ENCODE measurements at regions of chr15 and their contacts with region 1.

Region 1: DNA sequence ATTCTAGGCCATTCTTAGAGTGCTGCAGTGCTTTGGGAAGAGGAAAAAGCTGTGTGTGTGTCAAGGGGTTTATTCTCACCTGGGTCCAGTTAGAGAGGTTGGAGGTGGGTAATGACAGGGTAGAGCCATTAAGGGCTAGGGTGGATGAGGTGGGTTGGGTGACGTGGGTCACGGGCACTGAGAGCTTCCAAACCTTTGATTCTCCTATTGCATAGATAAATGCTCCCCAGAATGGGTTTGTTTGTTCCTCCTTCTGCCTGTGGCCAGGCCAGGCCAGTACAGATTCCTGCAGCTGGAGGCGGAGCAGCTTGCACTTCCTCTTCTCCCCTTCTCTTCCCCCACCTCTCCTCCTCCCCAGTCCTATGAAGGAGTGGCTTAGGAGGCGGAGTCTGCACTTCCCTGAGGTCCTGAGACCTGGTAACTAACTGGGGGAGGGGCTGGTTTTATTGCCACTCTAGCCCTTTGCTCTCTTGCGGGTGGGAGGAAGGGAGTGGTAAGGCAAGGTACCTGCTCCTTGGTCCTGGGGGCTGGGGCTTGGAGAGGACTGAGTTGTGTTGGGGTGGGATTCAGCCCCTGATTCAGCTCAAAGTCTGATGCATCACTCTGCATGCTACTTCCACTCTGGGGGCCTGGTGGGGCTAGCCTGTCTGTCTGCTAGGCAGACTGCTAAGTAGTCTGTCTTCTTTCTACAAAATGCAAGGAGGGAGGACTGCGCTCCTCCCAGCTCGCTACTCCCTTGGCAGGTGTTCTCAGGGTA is 3.5 kb downstream of the SPINT1 start:
- DNase-seq: peak; percentile 83

Region 2: DNA sequence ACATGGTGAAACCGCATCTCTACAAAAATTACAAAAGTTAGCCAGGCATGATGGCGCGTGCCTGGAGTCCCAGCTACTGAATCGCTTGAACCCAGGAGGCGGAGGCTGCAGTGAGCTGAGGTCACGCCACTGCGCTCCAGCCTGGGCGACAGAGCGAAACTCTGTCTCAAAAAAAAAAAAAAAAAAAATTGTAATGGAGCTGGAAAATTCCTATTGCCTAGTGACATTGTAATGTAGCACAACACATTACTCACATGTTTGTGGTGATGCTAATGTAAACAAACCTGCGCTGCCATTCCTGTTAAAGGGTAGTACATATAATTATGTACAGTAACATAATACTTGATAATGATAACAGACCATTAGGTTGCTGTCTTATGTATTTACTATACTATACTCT is 214.2 kb before region 1 on chr15:
- intact Hi-C with region 1: loop called in 1 of 2 experiments (anchors 2 kb)
- DNase-seq: no peak

Measured in posterior vena cava (tissue), 2 donors.